Endothelial cell of umbilical vein (primary cell): ENCODE measurements at regions of chr3 and their contacts with region 1.

Region 1: GRCh38 chr3:4712143-4712542 is 219.0 kb downstream of the ITPR1 start:
- DNase-seq: no peak
- H3K4me3 ChIP-seq: no peak overlapping the region
- H3K27ac ChIP-seq: no peak overlapping the region
- H3K4me1 ChIP-seq: peaks cover 15% of the 10 kb centered on the region
- H3K27me3 ChIP-seq: no peaks in the 10 kb centered on the region
- CTCF ChIP-seq: no peak
- POLR2A ChIP-seq: no peak

Region 2: DNA sequence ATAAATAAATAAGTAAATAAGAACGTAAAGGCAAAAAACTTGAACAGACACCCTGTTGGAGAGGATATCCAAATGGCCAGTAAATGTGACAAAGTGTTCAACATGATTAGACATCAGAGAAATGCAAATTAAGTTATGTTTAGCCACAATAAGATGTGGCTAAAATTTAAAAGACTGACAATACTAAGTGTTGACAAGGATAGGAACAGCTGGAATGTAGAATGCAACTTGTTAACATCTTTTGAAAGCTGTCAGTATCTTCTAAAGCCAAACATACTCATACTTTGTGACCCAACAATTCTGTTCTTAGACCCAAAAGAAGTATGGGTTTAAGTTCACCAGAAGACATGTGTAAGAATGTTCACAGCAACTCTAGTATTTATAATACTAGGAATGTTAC is 21.9 kb before region 1 on chr3:
- CTCF ChIA-PET with region 1: interaction called, 10 read pairs
- POLR2A ChIA-PET with region 1: no interaction called
- dilution Hi-C with region 1: no loop called
- intact Hi-C with region 1: no loop called
- DNase-seq: no peak
- H3K4me3 ChIP-seq: no peak overlapping the region
- H3K27ac ChIP-seq: no peak overlapping the region
- H3K4me1 ChIP-seq: no peaks in the 10 kb centered on the region
- H3K27me3 ChIP-seq: no peaks in the 10 kb centered on the region
- CTCF ChIP-seq: no peak
- POLR2A ChIP-seq: no peak

Region 3: GRCh38 chr3:5016218-5017161 is 304.3 kb after region 1 on chr3:
- CTCF ChIA-PET with region 1: interaction called, 31 read pairs
- POLR2A ChIA-PET with region 1: no interaction called
- dilution Hi-C with region 1: no loop called
- intact Hi-C with region 1: no loop called
- DNase-seq: peak; percentile 85
- H3K4me3 ChIP-seq: no peak overlapping the region
- H3K27ac ChIP-seq: peak overlapping the region; percentile 86
- H3K4me1 ChIP-seq: peaks cover 35% of the 10 kb centered on the region
- H3K27me3 ChIP-seq: no peaks in the 10 kb centered on the region
- CTCF ChIP-seq: no peak
- POLR2A ChIP-seq: peak; percentile 34

Region 4: GRCh38 chr3:5041315-5041714 is 329.2 kb after region 1 on chr3:
- CTCF ChIA-PET with region 1: interaction called, 28 read pairs
- POLR2A ChIA-PET with region 1: no interaction called
- dilution Hi-C with region 1: no loop called
- intact Hi-C with region 1: no loop called
- DNase-seq: no peak
- H3K4me3 ChIP-seq: no peak overlapping the region
- H3K27ac ChIP-seq: no peak overlapping the region
- H3K4me1 ChIP-seq: no peaks in the 10 kb centered on the region
- H3K27me3 ChIP-seq: no peaks in the 10 kb centered on the region
- CTCF ChIP-seq: no peak
- POLR2A ChIP-seq: no peak

Region 5: DNA sequence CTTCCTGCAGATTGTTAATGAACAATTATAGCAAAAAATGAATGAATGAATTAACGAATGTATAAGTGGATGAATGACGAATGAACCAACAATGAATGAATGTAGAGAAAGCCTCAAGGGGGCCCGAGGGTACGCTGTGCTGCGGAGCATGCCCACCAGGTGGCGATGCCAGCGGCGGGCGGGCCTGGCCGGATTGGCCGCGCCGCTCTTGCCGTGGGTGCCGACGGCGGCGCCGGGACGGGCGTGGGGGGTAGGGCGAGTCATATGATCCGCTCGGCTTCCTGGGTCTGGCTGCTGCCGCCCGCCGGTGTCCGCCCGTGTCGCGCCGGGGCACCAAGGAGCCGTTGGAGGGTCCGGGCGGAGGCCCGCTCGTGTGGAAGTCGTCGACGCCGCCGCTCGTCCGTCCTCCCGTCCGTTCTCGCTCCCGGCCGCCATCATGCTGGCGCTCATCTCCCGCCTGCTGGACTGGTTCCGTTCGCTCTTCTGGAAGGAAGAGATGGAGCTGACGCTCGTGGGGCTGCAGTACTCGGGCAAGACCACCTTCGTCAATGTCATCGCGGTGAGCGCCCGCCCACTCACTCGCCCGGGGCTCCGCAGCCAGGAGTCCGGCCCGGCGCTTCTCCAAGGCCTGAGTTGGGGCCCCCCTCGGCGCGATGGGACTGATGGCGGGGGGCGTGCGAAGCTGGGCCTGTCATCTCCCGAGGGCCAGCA is 410.0 kb after region 1 on chr3 and contains the start of gene ARL8B:
- CTCF ChIA-PET with region 1: interaction called, 9 read pairs
- POLR2A ChIA-PET with region 1: no interaction called
- dilution Hi-C with region 1: no loop called
- intact Hi-C with region 1: loop called (anchors 1 kb)
- DNase-seq: peak; percentile 87
- H3K4me3 ChIP-seq: peak within 1 kb of the TSS; percentile 61 to 95 (median 79)
- H3K27ac ChIP-seq: peak within 1 kb of the TSS; percentile 75
- H3K4me1 ChIP-seq: peaks cover 10% of the 10 kb centered on the region
- H3K27me3 ChIP-seq: no peaks in the 10 kb centered on the region
- CTCF ChIP-seq: peak; percentile 93 to 99
- POLR2A ChIP-seq: peak; percentile 80
- total RNA-seq, gene ARL8B: 58.0 and 58.2 TPM in 2 replicates

Region 6: DNA sequence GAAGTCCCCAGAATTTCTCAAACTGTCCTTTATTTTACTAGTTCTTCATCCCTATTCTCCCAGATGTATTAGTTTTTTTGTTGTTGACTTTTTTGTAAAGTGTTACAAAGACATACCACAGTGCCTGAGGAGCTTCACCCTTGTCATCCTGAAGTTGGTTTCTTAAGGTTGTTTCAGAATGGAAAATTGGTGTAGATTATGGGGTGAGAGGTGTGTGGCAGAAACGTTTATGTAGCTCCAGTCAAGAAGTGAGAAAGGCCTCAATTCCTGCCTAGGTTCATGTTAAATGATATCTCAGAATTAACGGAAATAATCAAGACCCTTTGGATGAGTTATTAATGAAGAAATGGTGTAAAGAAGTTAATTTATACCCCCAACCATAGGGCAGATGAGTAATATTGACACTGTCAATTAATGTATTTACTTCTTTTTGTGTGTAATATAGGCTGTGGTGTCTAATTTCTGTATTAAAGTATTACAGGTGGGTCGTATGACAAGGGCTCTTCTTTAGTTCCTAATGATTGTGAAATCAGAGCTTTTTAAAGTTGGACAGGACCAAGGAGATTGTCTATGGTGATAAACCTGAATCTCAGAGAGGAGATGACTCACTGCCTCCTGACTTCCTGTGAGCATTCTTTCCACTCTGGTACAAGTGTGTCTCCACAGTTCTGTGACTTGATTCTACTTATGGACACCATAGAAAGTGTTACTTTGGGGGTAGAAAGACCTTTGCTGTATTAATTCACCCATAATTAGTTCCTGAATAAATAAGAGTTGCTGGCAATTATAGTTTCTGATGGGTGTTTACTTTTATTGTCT is 482.4 kb after region 1 on chr3:
- CTCF ChIA-PET with region 1: interaction called, 12 read pairs
- POLR2A ChIA-PET with region 1: no interaction called
- dilution Hi-C with region 1: no loop called
- intact Hi-C with region 1: loop called (anchors 5 kb)
- DNase-seq: peak; percentile 87
- H3K4me3 ChIP-seq: peak overlapping the region in 1 of 3 experiments; percentile 42
- H3K27ac ChIP-seq: peak overlapping the region; percentile 75
- H3K4me1 ChIP-seq: peaks cover 41% of the 10 kb centered on the region
- H3K27me3 ChIP-seq: no peaks in the 10 kb centered on the region
- CTCF ChIP-seq: no peak
- POLR2A ChIP-seq: no peak